ENCODE measurements at regions of chr6 and their contacts with region 1.

Region 1: GRCh38 chr6:25788305-25788922 is 33.9 kb downstream of the SLC17A4 start:
- H3K4me3 ChIP-seq: no peak overlapping the region
- H3K27ac ChIP-seq: no peak overlapping the region
- H3K4me1 ChIP-seq: no peaks in the 10 kb centered on the region
- CTCF ChIP-seq: peak; percentile 29; the same call in 1 of the 2 replicates

Region 2: GRCh38 chr6:25659633-25660368 is 128.6 kb before region 1 on chr6:
- CTCF ChIA-PET with region 1: no interaction called
- POLR2A ChIA-PET with region 1: no interaction called
- H3K4me3 ChIP-seq: no peak overlapping the region
- H3K27ac ChIP-seq: no peak overlapping the region
- H3K4me1 ChIP-seq: no peaks in the 10 kb centered on the region
- CTCF ChIP-seq: no peak

Region 3: DNA sequence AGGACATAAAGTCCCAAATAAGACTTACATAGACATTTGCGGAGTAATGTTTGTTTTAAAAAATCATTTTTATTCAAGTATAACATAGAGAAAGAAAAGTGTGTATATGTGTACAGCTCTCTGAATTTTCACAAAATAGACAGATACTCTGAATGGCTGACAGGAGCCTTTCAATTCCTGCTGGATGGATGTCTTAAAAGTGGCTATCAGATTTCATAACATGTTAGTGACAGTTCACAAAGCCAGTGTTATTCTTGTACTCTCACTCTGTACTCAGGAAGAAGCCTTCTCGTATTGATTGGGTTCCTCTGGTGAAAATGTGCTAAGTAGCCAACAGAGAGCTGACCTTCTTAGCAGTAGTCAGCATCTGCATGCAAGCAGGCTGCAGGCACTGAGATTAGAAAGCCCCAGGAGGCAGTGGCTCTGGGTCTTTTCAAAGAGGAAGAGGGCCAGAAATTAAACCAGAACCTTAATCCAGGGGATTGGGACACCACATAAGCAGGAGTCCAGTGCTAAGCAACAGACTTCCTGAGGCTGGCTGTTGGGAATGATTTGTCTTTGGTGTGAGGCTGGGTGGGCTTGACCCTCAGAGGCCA is 14.2 kb before region 1 on chr6:
- CTCF ChIA-PET with region 1: interaction called, 19 read pairs
- POLR2A ChIA-PET with region 1: no interaction called
- H3K4me3 ChIP-seq: no peak overlapping the region
- H3K27ac ChIP-seq: no peak overlapping the region
- H3K4me1 ChIP-seq: no peaks in the 10 kb centered on the region
- CTCF ChIP-seq: no peak

Region 4: DNA sequence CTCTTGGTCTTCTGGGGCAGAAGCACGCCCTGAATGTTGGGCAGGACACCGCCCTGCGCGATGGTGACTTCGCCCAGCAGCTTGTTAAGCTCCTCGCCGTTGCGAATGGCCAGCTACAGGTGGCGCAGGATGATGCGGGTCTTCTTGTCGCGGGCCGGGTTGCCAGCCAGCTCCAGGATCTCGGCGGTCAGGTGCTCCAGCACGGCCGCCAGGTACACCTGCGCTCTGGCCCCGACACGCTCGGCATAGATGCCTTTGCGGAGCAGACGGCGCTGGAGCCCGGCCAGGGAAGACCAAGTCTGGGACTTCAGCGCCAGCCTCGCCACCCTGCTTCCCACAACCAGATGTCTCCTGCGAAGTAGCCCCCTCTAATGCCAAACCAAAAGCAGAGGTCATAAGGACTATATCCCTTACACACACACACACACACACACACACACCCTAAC is 93.7 kb after region 1 on chr6:
- CTCF ChIA-PET with region 1: interaction called, 18 read pairs
- POLR2A ChIA-PET with region 1: no interaction called
- H3K4me3 ChIP-seq: peak overlapping the region; percentile 18
- H3K27ac ChIP-seq: no peak overlapping the region
- H3K4me1 ChIP-seq: no peaks in the 10 kb centered on the region; the same call in 1 of the 2 replicates
- CTCF ChIP-seq: no peak

Region 5: DNA sequence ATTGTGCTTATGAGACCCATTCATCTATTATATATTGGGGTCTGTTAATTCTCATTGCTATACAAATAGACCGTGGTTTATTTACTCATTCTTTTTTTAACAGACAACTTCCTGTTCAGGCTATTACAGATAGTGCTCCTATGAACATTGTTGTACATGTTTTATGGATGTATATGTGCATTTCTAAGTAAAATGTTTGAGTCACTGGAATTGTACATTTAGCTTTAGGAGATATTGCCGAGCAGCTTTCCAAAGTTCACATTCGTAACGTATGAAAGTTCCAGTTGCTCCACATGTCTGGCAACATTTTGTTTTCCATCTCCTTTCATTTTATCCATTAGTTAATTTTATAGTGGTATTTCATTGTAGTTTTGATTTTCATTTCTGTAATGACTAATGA is 122.9 kb after region 1 on chr6:
- CTCF ChIA-PET with region 1: interaction called, 11 read pairs
- POLR2A ChIA-PET with region 1: no interaction called
- H3K4me3 ChIP-seq: no peak overlapping the region
- H3K27ac ChIP-seq: no peak overlapping the region
- H3K4me1 ChIP-seq: no peaks in the 10 kb centered on the region
- CTCF ChIP-seq: no peak

Measured in HEK293 (cell line).